ENCODE measurements at regions of chrX and their contacts with region 1.

Region 1: DNA sequence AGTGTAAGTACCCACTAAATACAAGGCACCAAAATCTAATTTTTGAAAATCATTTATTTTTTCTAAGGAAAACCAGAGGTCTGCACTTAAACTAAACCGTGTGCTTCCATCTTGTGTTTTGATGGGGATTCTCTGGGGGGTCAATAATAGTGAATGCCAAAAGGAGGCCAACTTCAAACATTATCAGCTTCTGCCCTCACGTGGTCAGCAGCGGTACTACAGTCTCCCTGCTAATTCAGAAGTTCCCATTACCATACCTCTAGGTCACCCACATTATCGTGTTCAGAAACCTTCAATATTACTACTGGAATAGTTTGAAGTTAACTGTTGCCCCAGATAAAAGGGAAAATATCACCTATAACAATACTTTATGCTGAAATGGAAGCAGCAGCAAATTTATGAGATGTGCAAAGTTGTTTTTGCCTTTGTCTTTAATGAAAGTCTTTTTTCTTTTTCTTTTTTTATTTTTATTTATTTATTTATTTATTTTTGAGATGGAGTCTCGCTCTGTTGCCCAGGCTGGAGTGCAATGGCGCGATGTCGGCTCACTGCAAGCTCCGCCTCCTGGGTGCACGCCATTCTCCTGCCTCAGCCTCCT is 17.3 kb downstream of the CTPS2 start:
- DNase-seq: peak; percentile 23 to 91
- H3K4me3 ChIP-seq: no peak overlapping the region
- CTCF ChIP-seq: peak in 1 of 3 donors; percentile 24
- POLR2A ChIP-seq: no peak

Region 2: DNA sequence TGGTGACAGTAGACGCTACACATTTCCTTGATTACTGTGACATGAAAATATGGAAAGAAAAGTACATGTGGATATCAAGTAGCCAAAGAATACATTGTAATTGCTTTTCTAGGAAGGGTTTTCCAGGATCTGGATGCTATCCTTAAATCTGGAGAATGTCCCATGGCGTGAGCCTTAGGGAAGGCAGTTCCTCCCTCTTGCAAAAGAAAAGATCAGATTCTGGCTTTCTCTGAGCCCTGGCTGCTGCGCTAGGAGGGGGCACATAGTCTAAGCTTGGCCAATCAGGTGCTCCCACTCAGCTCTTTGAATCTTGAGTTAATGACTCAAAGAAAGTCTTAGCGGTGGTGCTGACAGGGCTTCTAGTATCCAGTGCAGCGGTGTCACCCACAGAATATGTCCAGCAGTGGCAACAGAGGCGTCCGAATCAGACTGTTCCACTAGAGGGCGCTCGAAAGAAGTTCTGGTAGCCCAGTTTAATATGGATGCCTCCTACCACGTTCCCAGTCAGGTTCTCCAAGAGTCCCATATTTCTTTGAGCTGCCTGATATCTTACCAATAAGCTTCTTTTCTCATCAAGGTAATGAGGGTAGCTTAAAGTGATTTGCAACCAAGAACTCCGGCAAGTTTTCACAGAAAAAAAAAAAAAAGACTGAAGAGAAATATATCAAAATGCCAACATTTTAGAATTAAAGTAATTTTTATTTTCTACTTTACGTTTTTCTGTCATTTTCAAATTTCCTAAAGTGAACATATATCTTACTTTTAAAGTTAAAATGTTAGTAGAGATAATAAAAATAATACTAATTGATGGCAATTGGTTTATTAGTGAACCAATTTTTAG is 258.6 kb before region 1 on chrX:
- intact Hi-C with region 1: loop called (anchors 10 kb)
- DNase-seq: peak; percentile 63 to 91
- H3K4me3 ChIP-seq: no peak overlapping the region
- CTCF ChIP-seq: no peak
- POLR2A ChIP-seq: no peak

Region 3: DNA sequence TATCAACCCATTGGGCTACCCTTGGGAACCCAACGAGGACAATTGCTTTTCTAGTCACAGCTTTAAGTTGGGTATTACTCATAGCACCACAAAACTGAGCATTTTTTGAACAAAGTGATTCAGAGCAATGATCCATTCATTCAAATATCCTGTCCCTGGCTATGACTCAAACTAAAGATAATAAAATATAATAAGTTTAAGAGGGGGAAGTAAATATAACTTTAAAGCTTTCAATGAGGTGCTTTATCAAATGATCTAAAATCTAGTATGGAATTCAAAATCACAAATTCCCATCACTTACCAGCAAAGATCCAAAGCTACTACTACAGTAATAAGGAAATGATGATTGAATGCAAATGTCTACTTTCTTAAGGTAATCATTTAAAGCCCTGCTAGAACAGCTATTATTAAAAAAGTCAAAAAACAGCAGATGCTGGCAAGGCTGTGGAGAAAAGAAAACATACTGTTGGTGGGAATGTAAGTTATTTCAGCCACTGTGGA is 85.0 kb before region 1 on chrX:
- intact Hi-C with region 1: no loop called
- DNase-seq: no peak
- H3K4me3 ChIP-seq: no peak overlapping the region
- CTCF ChIP-seq: no peak
- POLR2A ChIP-seq: no peak

Measured in lower leg skin (tissue), 4 donors.